Activated CD8-positive, alpha-beta T cell treated with anti-CD3 and anti-CD28 coated beads, Interleukin-2, amount 10 ng/mL, durations not matched to agents 7 days and 5 days (primary cell): ENCODE measurements at regions of chr2 and their contacts with region 1.

Region 1: GRCh38 chr2:176814306-176815052 is 398.1 kb upstream of the HNRNPA3 start:
- DNase-seq: peak; percentile 40
- ATAC-seq: no peak
- H3K4me3 Mint-ChIP-seq: no peak overlapping the region
- H3K27ac Mint-ChIP-seq: no peak overlapping the region
- H3K4me1 Mint-ChIP-seq: peaks cover 30% of the 10 kb centered on the region
- H3K27me3 Mint-ChIP-seq: no peaks in the 10 kb centered on the region

Region 2: DNA sequence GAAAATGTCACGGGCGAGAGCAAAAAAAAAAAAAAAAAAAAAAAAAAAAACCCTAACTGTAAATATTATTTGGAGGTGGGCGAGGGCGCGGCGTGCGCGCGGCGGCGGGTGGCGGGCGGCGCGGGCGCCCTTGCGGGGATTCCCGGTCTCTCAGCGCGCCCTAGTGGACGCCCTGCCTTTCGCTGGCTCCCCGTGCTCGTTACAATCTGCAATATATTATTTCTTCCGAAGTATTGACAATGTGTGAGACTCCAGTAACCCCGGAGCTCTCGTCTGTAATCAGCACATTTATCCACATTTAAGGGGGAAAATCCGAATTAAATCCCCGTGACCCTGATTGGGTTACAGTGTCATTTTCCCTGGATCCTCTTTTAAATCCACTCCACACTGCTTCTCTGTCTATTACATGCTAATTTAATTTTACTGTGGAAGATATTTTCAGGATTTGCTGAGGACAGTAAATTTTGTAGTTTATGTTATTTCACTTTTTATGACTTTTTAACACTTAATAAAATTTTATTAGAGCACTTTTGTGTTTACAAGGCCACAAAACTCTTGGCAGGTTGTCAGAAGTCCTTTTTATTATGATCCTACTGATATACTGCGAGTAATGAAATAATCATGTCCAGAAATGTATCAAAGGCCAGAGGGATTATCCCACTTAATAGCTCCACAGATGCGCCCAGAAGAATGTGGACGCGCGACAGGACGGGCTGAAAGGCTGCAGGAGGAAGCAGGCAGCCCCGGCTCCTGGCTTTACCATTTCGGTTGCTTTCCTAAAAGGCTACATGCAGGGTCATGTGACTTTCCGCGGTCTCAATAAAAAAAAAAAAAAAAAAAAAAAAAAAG is 176.1 kb before region 1 on chr2:
- CTCF ChIA-PET with region 1: interaction called, 15 read pairs
- POLR2A ChIA-PET with region 1: no interaction called
- DNase-seq: peak; percentile 70
- ATAC-seq: peak; percentile 94
- H3K4me3 Mint-ChIP-seq: peak overlapping the region; percentile 61
- H3K27ac Mint-ChIP-seq: no peak overlapping the region
- H3K4me1 Mint-ChIP-seq: peaks cover 7% of the 10 kb centered on the region
- H3K27me3 Mint-ChIP-seq: peaks cover 60% of the 10 kb centered on the region

Region 3: GRCh38 chr2:176804392-176804791 is 10.1 kb before region 1 on chr2:
- CTCF ChIA-PET with region 1: interaction called, 19 read pairs
- POLR2A ChIA-PET with region 1: no interaction called
- DNase-seq: no peak
- ATAC-seq: no peak
- H3K4me3 Mint-ChIP-seq: no peak overlapping the region
- H3K27ac Mint-ChIP-seq: no peak overlapping the region
- H3K4me1 Mint-ChIP-seq: peaks cover 6% of the 10 kb centered on the region
- H3K27me3 Mint-ChIP-seq: no peaks in the 10 kb centered on the region

Region 4: DNA sequence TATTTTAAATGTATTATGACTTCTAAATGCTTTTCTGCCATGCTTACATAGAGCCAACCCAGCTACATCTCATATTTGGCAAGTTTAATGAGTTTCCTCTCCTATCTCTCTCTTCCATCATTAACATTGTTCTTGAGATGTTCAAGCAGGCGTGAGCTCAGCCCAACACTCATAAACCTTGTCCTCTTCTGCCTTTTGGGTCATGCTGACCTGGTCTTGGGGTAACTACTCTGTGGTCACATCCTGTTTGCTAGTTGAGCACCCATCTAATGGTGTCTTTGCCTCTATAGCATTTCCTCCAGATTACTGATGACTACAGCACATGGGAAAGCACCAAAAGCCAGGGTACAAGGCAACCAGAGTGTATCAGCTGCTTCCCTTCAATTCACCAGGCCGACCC is 31.2 kb after region 1 on chr2:
- CTCF ChIA-PET with region 1: interaction called, 17 read pairs
- POLR2A ChIA-PET with region 1: no interaction called
- DNase-seq: no peak
- ATAC-seq: no peak
- H3K4me3 Mint-ChIP-seq: no peak overlapping the region
- H3K27ac Mint-ChIP-seq: peak overlapping the region; percentile 70
- H3K4me1 Mint-ChIP-seq: peaks cover 35% of the 10 kb centered on the region
- H3K27me3 Mint-ChIP-seq: no peaks in the 10 kb centered on the region

Region 5: GRCh38 chr2:176873405-176873804 is 58.9 kb after region 1 on chr2:
- CTCF ChIA-PET with region 1: interaction called, 10 read pairs
- POLR2A ChIA-PET with region 1: no interaction called
- DNase-seq: no peak
- ATAC-seq: no peak
- H3K4me3 Mint-ChIP-seq: no peak overlapping the region
- H3K27ac Mint-ChIP-seq: peak overlapping the region; percentile 4
- H3K4me1 Mint-ChIP-seq: peaks cover 27% of the 10 kb centered on the region
- H3K27me3 Mint-ChIP-seq: no peaks in the 10 kb centered on the region

Region 6: GRCh38 chr2:177164584-177165052 is 350.1 kb after region 1 on chr2:
- CTCF ChIA-PET with region 1: no interaction called
- POLR2A ChIA-PET with region 1: no interaction called
- DNase-seq: peak; percentile 86
- ATAC-seq: peak; percentile 79
- H3K4me3 Mint-ChIP-seq: no peak overlapping the region
- H3K27ac Mint-ChIP-seq: no peak overlapping the region
- H3K4me1 Mint-ChIP-seq: peaks cover 29% of the 10 kb centered on the region
- H3K27me3 Mint-ChIP-seq: peaks cover 10% of the 10 kb centered on the region